Activated CD4-positive, alpha-beta T cell treated with anti-CD3 and anti-CD28 coated beads, Interleukin-2, amount 10 ng/mL, durations not matched to agents 24 days and 14 days (primary cell): ENCODE measurements at regions of chr15 and their contacts with region 1.

Region 1: GRCh38 chr15:43824302-43825246 is at the start of gene MFAP1:
- DNase-seq: peak; percentile 97
- H3K4me3 Mint-ChIP-seq: peak within 1 kb of the TSS; percentile 92
- H3K27ac Mint-ChIP-seq: peak within 1 kb of the TSS; percentile 98
- H3K4me1 Mint-ChIP-seq: peaks cover 38% of the 10 kb centered on the region
- H3K27me3 Mint-ChIP-seq: no peaks in the 10 kb centered on the region
- total RNA-seq, gene MFAP1: 49.3 and 51.3 TPM in 2 replicates

Region 2: GRCh38 chr15:43776718-43777583 is 47.6 kb before region 1 on chr15 and contains the start of gene ELL3:
- intact Hi-C with region 1: loop called (anchors 1 kb)
- DNase-seq: peak; percentile 94
- H3K4me3 Mint-ChIP-seq: peak within 1 kb of the TSS; percentile 90
- H3K27ac Mint-ChIP-seq: peak within 1 kb of the TSS; percentile 89
- H3K4me1 Mint-ChIP-seq: peaks cover 21% of the 10 kb centered on the region
- H3K27me3 Mint-ChIP-seq: peaks cover 12% of the 10 kb centered on the region
- total RNA-seq, gene ELL3: 1.2 and 1.3 TPM in 2 replicates

Region 3: GRCh38 chr15:43791993-43792760 is 32.4 kb before region 1 on chr15 and contains the start of gene SERF2:
- intact Hi-C with region 1: loop called (anchors 2 kb)
- DNase-seq: peak; percentile 100
- H3K4me3 Mint-ChIP-seq: peak within 1 kb of the TSS; percentile 98
- H3K27ac Mint-ChIP-seq: peak within 1 kb of the TSS; percentile 97
- H3K4me1 Mint-ChIP-seq: peaks cover 28% of the 10 kb centered on the region
- H3K27me3 Mint-ChIP-seq: no peaks in the 10 kb centered on the region
- total RNA-seq, gene SERF2: 524 TPM in 2 replicates

Region 4: GRCh38 chr15:43800286-43801141 is 24.1 kb before region 1 on chr15 and contains the start of gene HYPK:
- intact Hi-C with region 1: loop called (anchors 1 kb)
- DNase-seq: peak; percentile 98
- H3K4me3 Mint-ChIP-seq: peak within 1 kb of the TSS; percentile 96
- H3K27ac Mint-ChIP-seq: peak within 1 kb of the TSS; percentile 98
- H3K4me1 Mint-ChIP-seq: peaks cover 34% of the 10 kb centered on the region
- H3K27me3 Mint-ChIP-seq: no peaks in the 10 kb centered on the region
- total RNA-seq, gene HYPK: 20.3 and 33.8 TPM in 2 replicates

Region 5: DNA sequence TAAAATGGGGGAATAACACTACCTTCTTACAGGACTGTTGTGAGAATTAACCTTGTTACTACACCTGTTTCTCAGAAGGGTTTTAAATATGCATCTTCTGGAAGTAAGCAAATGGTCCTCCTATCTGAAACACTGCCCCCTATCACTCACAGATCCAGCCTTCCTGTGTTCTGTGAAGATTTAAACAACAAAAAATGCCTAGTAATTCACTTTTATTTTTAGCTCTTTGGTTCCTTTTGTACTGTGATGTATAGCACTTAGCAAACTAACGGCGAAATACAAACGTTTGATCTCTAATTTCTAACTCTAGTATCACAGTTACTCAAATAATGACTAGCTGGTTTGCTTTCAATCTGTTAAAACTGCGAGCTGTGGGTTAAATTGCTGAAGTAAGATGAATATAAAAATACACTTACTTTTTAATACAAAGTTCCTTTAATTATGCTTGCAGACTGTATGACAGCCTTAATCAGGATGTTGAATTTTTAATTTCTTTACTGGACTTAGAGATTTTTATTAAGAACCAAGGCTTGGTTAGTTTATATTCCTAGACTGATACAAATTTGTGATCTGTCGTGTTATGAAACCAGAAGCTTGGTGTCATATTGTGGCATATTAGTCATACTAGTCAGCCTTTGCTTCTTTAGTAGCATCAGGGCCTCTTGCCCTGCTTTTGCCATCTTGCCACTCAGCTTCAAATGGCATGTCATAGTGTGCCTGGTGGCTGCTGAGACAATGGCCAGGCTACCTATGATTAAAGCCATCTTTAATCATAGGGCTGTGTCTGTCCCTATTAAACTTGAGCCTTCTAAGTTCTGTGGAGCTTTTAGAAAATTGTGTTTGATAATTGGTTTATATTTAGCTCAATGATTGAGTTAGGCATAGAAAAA is 721.6 kb after region 1 on chr15:
- intact Hi-C with region 1: loop called (anchors 10 kb)
- DNase-seq: peak; percentile 75
- H3K4me3 Mint-ChIP-seq: peak overlapping the region; percentile 62
- H3K27ac Mint-ChIP-seq: peak overlapping the region; percentile 84
- H3K4me1 Mint-ChIP-seq: peaks cover 36% of the 10 kb centered on the region
- H3K27me3 Mint-ChIP-seq: no peaks in the 10 kb centered on the region

Region 6: GRCh38 chr15:44728576-44729407 is 904.2 kb after region 1 on chr15:
- intact Hi-C with region 1: loop called (anchors 10 kb)
- DNase-seq: peak; percentile 99
- H3K4me3 Mint-ChIP-seq: peak overlapping the region; percentile 99
- H3K27ac Mint-ChIP-seq: peak overlapping the region; percentile 100
- H3K4me1 Mint-ChIP-seq: peaks cover 64% of the 10 kb centered on the region
- H3K27me3 Mint-ChIP-seq: peaks cover 2% of the 10 kb centered on the region